Calu3 (cell line): ENCODE measurements at regions of chr4 and their contacts with region 1.

Region 1: GRCh38 chr4:71553605-71554004 is 214.8 kb downstream of the SLC4A4 start:
- DNase-seq: peak; percentile 1
- H3K4me3 Mint-ChIP-seq: no peak overlapping the region
- H3K27ac Mint-ChIP-seq: no peak overlapping the region
- H3K4me1 Mint-ChIP-seq: peaks cover 22% of the 10 kb centered on the region
- H3K27me3 Mint-ChIP-seq: no peaks in the 10 kb centered on the region
- CTCF ChIP-seq: peak; percentile 32

Region 2: GRCh38 chr4:71050809-71051208 is 502.8 kb before region 1 on chr4:
- CTCF ChIA-PET with region 1: no interaction called
- intact Hi-C with region 1: loop called (anchors 10 kb)
- DNase-seq: no peak
- H3K4me3 Mint-ChIP-seq: no peak overlapping the region
- H3K27ac Mint-ChIP-seq: no peak overlapping the region
- H3K4me1 Mint-ChIP-seq: no peaks in the 10 kb centered on the region
- H3K27me3 Mint-ChIP-seq: no peaks in the 10 kb centered on the region
- CTCF ChIP-seq: no peak

Region 3: GRCh38 chr4:71184195-71184781 is 369.3 kb before region 1 on chr4:
- CTCF ChIA-PET with region 1: interaction called, 3 read pairs
- intact Hi-C with region 1: loop called (anchors 2 kb)
- DNase-seq: peak; percentile 26
- H3K4me3 Mint-ChIP-seq: no peak overlapping the region
- H3K27ac Mint-ChIP-seq: no peak overlapping the region
- H3K4me1 Mint-ChIP-seq: no peaks in the 10 kb centered on the region
- H3K27me3 Mint-ChIP-seq: no peaks in the 10 kb centered on the region
- CTCF ChIP-seq: peak; percentile 16

Region 4: DNA sequence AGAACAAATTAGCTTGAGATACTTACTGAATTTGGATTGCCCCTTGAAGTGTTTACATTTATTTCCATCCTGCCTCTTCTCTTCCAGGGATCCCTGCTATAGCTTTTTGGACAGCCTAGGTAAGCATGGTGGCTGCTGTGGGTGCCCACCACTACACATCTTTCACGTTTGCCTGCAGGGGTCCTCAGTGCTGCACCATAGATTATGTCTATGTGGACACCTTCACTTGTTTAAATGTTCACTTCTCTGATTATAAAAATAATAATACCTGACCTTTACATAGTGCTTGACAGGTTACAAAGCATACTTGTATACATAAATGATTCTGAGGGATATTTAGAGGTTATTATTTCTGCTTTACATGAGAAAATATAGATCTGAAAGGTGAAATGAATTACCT is 282.7 kb before region 1 on chr4:
- CTCF ChIA-PET with region 1: interaction called, 6 read pairs
- intact Hi-C with region 1: loop called (anchors 1 kb)
- DNase-seq: peak; percentile 63
- H3K4me3 Mint-ChIP-seq: no peak overlapping the region
- H3K27ac Mint-ChIP-seq: no peak overlapping the region
- H3K4me1 Mint-ChIP-seq: peaks cover 17% of the 10 kb centered on the region
- H3K27me3 Mint-ChIP-seq: no peaks in the 10 kb centered on the region
- CTCF ChIP-seq: peak; percentile 40

Region 5: DNA sequence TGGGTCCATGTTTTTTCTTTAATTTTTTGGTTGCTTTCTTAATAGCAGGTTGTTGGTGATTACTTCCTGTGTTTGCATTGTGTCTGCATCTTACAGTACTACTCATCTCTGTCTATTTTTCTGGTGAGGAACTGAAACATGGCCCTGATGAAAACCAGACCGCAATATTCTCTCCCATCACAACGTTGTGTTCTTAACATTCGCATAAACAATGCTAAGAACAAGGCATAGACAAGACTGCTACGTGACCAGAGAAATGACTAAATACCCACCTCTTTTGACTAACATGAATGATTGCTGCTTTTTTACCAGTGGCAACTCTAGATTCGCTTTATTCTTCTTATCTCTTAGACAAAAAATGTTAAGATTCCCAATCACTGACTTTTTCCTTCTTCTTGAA is 51.2 kb after region 1 on chr4:
- CTCF ChIA-PET with region 1: interaction called, 4 read pairs
- intact Hi-C with region 1: loop called (anchors 5 kb)
- DNase-seq: no peak
- H3K4me3 Mint-ChIP-seq: peak overlapping the region; percentile 68
- H3K27ac Mint-ChIP-seq: peak overlapping the region; percentile 89
- H3K4me1 Mint-ChIP-seq: peaks cover 49% of the 10 kb centered on the region
- H3K27me3 Mint-ChIP-seq: no peaks in the 10 kb centered on the region
- CTCF ChIP-seq: no peak